GM12878 (cell line): ENCODE measurements at regions of chr4 and their contacts with region 1.

Region 1: DNA sequence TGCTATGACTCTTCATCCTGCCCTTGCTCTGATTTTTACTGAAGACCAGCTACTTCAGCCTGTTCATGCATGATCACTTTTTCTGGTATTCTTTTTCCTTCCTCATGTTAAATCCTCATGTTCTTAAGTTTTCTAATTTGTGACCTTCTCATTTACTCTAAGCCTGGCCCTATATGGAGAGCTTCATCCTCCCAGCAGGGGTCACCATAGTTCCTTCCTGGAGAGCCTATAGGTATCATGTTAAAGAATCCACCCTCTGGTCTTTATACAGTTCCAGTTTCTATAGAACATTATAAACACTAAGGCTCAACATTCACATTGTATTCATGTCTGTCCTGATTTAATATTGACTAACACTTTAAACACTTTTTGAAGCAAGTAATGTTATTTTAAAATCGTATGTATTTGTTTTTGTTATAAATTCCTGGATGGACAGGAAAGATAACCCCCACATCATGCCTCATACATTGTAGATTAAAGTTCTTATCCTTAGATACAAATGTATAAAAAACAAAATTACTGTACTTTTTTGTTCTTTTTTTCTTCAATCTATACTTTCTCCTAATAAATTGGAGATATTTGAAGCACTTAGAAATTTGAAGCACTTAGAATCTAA is 53.8 kb upstream of the OTUD4 start:
- DNase-seq: peak; percentile 49
- ATAC-seq: peak; percentile 100
- H3K4me3 ChIP-seq: no peak overlapping the region
- H3K27ac ChIP-seq: no peak overlapping the region
- H3K4me1 ChIP-seq: no peaks in the 10 kb centered on the region
- H3K27me3 ChIP-seq: no peaks in the 10 kb centered on the region
- CTCF ChIP-seq: peak; percentile 84 to 93 (median 84)
- EP300 ChIP-seq: no peak
- POLR2A ChIP-seq: no peak
- RAD21 ChIP-seq: peak; percentile 100

Region 2: DNA sequence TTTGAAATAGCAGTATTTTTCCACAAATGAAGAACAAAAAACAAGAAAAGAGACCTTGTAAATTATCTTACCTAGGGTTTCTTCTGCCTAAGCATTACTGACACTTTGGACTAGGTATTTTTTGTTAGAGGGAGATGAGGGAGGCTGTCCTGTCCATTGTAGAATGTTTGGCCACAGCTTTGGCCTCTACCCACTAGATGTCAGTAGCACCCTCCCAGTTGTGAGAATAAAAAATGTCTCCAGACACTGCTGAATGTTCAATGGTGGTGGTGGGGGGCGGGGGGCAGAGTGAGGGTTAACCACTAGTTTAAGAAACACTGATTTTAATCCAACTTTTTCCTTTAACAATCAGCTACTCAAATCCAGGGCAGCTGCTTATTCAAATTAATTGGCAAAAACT is 79.6 kb before region 1 on chr4:
- CTCF ChIA-PET with region 1: interaction called, 21 read pairs
- POLR2A ChIA-PET with region 1: interaction called, 4 read pairs
- RAD21 ChIA-PET with region 1: interaction called, 11 read pairs
- SMC1A ChIA-PET with region 1: interaction called, 3 read pairs
- in situ Hi-C with region 1: no loop called
- intact Hi-C with region 1: loop called (anchors 1 kb)
- DNase-seq: no peak
- ATAC-seq: peak; percentile 94
- H3K4me3 ChIP-seq: no peak overlapping the region
- H3K27ac ChIP-seq: peak overlapping the region; percentile 42; the same call in 1 of the 2 replicates
- H3K4me1 ChIP-seq: peaks cover 7% of the 10 kb centered on the region; the same call in 1 of the 2 replicates
- H3K27me3 ChIP-seq: no peaks in the 10 kb centered on the region
- CTCF ChIP-seq: peak; percentile 59 to 77 (median 70)
- EP300 ChIP-seq: no peak
- POLR2A ChIP-seq: no peak
- RAD21 ChIP-seq: peak; percentile 88

Region 3: GRCh38 chr4:145340071-145340675 is 106.0 kb after region 1 on chr4:
- CTCF ChIA-PET with region 1: no interaction called
- POLR2A ChIA-PET with region 1: no interaction called
- RAD21 ChIA-PET with region 1: no interaction called
- SMC1A ChIA-PET with region 1: no interaction called
- in situ Hi-C with region 1: no loop called
- intact Hi-C with region 1: loop called (anchors 1 kb)
- DNase-seq: no peak
- ATAC-seq: no peak
- H3K4me3 ChIP-seq: no peak overlapping the region
- H3K27ac ChIP-seq: no peak overlapping the region
- H3K4me1 ChIP-seq: no peaks in the 10 kb centered on the region
- H3K27me3 ChIP-seq: no peaks in the 10 kb centered on the region
- CTCF ChIP-seq: no peak
- EP300 ChIP-seq: no peak
- POLR2A ChIP-seq: no peak
- RAD21 ChIP-seq: no peak

Region 4: GRCh38 chr4:145388043-145388442 is 153.8 kb after region 1 on chr4:
- CTCF ChIA-PET with region 1: no interaction called
- POLR2A ChIA-PET with region 1: no interaction called
- RAD21 ChIA-PET with region 1: no interaction called
- SMC1A ChIA-PET with region 1: no interaction called
- in situ Hi-C with region 1: no loop called
- intact Hi-C with region 1: no loop called
- DNase-seq: no peak
- ATAC-seq: no peak
- H3K4me3 ChIP-seq: no peak overlapping the region
- H3K27ac ChIP-seq: no peak overlapping the region
- H3K4me1 ChIP-seq: no peaks in the 10 kb centered on the region
- H3K27me3 ChIP-seq: 0 out of 4 replicates have a peak, but pooled peaks cover 0 to 3% of the 10 kb centered on the region in 2 experiments
- CTCF ChIP-seq: no peak
- EP300 ChIP-seq: no peak
- POLR2A ChIP-seq: no peak
- RAD21 ChIP-seq: no peak

Region 5: GRCh38 chr4:145552181-145552822 is 318.1 kb after region 1 on chr4:
- CTCF ChIA-PET with region 1: interaction called, 139 read pairs
- POLR2A ChIA-PET with region 1: no interaction called
- RAD21 ChIA-PET with region 1: interaction called, 54 read pairs
- SMC1A ChIA-PET with region 1: interaction called, 83 read pairs
- in situ Hi-C with region 1: loop called (anchors 5 kb)
- intact Hi-C with region 1: loop called (anchors 1 kb)
- DNase-seq: peak; percentile 23
- ATAC-seq: peak; percentile 77
- H3K4me3 ChIP-seq: peak overlapping the region; percentile 31; the same call in 1 of the 2 replicates
- H3K27ac ChIP-seq: peak overlapping the region; percentile 61
- H3K4me1 ChIP-seq: peaks cover 12% of the 10 kb centered on the region
- H3K27me3 ChIP-seq: no peaks in the 10 kb centered on the region
- CTCF ChIP-seq: no peak
- EP300 ChIP-seq: no peak
- POLR2A ChIP-seq: no peak
- RAD21 ChIP-seq: no peak

Region 6: GRCh38 chr4:145602129-145602760 is 368.0 kb after region 1 on chr4:
- CTCF ChIA-PET with region 1: interaction called, 10 read pairs
- POLR2A ChIA-PET with region 1: no interaction called
- RAD21 ChIA-PET with region 1: interaction called, 3 read pairs
- SMC1A ChIA-PET with region 1: interaction called, 4 read pairs
- in situ Hi-C with region 1: no loop called
- intact Hi-C with region 1: no loop called
- DNase-seq: no peak
- ATAC-seq: no peak
- H3K4me3 ChIP-seq: no peak overlapping the region
- H3K27ac ChIP-seq: no peak overlapping the region
- H3K4me1 ChIP-seq: no peaks in the 10 kb centered on the region
- H3K27me3 ChIP-seq: no peaks in the 10 kb centered on the region; a peak in 1 of 4 replicates
- CTCF ChIP-seq: no peak
- EP300 ChIP-seq: no peak
- POLR2A ChIP-seq: no peak
- RAD21 ChIP-seq: no peak